A549 (cell line): ENCODE measurements at regions of chr19 and their contacts with region 1.

Region 1: GRCh38 chr19:46009530-46010510 is 13.0 kb downstream of the PGLYRP1 start:
- DNase-seq: peak; percentile 81
- ATAC-seq: peak; percentile 90 to 96
- H3K4me3 ChIP-seq: no peak overlapping the region
- H3K27ac ChIP-seq: no peak overlapping the region
- H3K4me1 ChIP-seq: peaks cover 7% of the 10 kb centered on the region; the same call in 1 of the 3 replicates
- CTCF ChIP-seq: peak; percentile 95
- EP300 ChIP-seq: no peak
- POLR2A ChIP-seq: no peak
- RAD21 ChIP-seq: peak; percentile 61 to 68

Region 2: GRCh38 chr19:45994989-45995714 is 14.7 kb before region 1 on chr19 and contains the start of gene CCDC61:
- CTCF ChIA-PET with region 1: interaction called, 67 read pairs
- POLR2A ChIA-PET with region 1: interaction called, 3 read pairs
- DNase-seq: peak; percentile 99 to 100
- ATAC-seq: peak; percentile 96 to 98
- H3K4me3 ChIP-seq: peak within 1 kb of the TSS; percentile 57
- H3K27ac ChIP-seq: peak within 1 kb of the TSS; percentile 72 to 88
- H3K4me1 ChIP-seq: peaks cover 5% of the 10 kb centered on the region
- CTCF ChIP-seq: no peak
- EP300 ChIP-seq: no peak
- POLR2A ChIP-seq: peak; percentile 93
- RAD21 ChIP-seq: no peak
- polyA plus RNA-seq, gene CCDC61: 3.2 and 4.1 TPM in 2 replicates

Region 3: DNA sequence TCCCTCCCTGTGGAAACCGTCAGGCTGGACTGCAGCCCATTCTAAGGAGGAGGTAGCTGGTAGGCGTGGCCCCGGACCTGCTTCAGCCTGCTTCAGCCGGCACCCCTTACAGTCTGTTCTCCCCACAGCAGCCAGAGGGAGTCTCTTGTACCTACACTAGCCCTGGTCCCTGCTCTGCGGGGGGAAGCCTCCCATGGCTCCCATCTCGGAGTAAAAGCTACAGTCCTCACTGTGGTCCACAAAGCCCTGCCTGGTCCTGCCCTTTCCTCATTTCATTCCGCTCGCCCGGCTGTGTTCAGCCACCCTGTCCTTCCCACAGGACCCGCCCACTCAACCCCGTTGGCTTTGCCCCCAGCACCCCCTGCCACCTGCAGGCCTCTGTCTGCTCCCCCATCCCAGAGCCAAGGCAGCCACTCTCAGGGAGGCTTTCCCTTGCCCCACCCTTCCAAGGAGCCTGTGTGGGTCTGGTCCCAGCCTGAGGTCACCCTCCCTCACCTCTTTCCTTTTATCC is 11.8 kb after region 1 on chr19:
- CTCF ChIA-PET with region 1: interaction called, 146 read pairs
- POLR2A ChIA-PET with region 1: no interaction called
- DNase-seq: peak in 1 of 2 experiments; percentile 34
- ATAC-seq: peak; percentile 11 to 28; a peak in 3 of 6 replicates
- H3K4me3 ChIP-seq: no peak overlapping the region
- H3K27ac ChIP-seq: no peak overlapping the region
- H3K4me1 ChIP-seq: peaks cover 4% of the 10 kb centered on the region; the same call in 2 of the 3 replicates
- CTCF ChIP-seq: no peak
- EP300 ChIP-seq: no peak
- POLR2A ChIP-seq: no peak
- RAD21 ChIP-seq: no peak

Region 4: DNA sequence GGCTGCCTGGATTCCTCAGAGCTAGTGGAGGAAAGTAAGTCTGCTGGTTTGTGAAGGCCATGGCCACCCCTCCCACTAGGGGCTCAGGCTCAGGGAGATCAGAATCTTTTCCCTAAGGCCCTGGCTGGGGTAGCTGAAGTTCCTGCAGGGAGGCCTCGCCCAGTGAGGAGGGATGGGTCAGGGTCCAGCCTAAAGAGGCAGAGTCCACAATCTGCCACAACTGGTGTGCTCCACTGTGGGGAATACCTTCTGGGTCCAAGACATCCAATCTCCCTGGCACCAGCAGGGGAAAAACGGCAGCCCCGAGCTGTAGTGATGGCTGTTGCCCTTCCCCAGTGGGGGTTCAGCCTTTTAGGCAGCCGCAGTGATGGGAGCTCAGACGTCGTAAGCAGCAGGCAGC is 91.5 kb after region 1 on chr19:
- CTCF ChIA-PET with region 1: no interaction called
- POLR2A ChIA-PET with region 1: no interaction called
- DNase-seq: no peak
- ATAC-seq: no peak
- H3K4me3 ChIP-seq: no peak overlapping the region
- H3K27ac ChIP-seq: no peak overlapping the region
- H3K4me1 ChIP-seq: no peaks in the 10 kb centered on the region
- CTCF ChIP-seq: no peak
- EP300 ChIP-seq: no peak
- POLR2A ChIP-seq: no peak
- RAD21 ChIP-seq: no peak